ENCODE measurements at regions of chr17 and their contacts with region 1.

Region 1: DNA sequence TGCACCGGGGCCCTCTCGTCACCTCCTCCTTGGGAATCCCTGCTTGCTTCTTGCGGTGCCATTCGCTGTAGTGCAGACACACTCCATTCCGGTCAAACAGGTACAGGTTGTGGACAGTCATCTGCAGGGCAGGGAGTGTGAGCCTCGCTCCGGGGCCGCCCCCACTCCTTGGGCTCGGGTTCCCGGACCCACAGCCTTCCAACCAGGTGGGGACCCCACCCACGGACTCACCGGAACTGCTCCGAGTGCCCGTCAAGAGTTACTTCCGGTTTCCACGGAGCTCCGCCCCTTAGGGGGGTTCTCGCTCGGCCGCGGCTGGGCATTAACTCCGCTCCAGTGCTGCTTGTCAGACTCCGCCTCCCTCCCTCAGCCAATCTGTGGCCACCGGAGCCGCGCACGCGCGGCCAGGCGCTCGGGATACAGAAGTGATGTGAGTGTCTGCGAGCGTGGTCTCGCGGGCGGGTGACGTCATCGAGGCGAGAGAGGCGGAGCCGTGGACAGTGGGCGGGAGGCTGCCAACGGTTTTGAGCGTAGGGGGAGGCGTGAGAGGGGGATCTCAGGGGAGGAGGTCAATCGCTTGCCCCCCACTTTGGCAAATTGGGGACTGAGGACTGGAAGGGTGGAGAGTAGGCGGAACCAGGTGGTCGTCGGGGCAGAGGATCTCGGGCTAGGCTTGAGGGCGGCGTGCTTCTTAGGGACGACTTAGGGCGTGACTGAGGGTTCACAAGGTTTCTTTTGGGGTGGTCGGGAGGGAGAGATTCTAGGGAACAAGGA is at the starts of genes CNTROB and TRAPPC1:
- DNase-seq: peak; percentile 99
- ATAC-seq: peak; percentile 96
- H3K4me3 Mint-ChIP-seq: peak within 1 kb of the TSS; percentile 97
- H3K27ac Mint-ChIP-seq: peak within 1 kb of the TSS; percentile 92
- H3K4me1 Mint-ChIP-seq: peaks cover 48% of the 10 kb centered on the region
- H3K27me3 Mint-ChIP-seq: no peaks in the 10 kb centered on the region
- CTCF ChIP-seq: no peak
- total RNA-seq, gene CNTROB: 23.0 and 24.6 TPM in 2 replicates
- total RNA-seq, gene TRAPPC1: 129 and 167 TPM in 2 replicates

Region 2: DNA sequence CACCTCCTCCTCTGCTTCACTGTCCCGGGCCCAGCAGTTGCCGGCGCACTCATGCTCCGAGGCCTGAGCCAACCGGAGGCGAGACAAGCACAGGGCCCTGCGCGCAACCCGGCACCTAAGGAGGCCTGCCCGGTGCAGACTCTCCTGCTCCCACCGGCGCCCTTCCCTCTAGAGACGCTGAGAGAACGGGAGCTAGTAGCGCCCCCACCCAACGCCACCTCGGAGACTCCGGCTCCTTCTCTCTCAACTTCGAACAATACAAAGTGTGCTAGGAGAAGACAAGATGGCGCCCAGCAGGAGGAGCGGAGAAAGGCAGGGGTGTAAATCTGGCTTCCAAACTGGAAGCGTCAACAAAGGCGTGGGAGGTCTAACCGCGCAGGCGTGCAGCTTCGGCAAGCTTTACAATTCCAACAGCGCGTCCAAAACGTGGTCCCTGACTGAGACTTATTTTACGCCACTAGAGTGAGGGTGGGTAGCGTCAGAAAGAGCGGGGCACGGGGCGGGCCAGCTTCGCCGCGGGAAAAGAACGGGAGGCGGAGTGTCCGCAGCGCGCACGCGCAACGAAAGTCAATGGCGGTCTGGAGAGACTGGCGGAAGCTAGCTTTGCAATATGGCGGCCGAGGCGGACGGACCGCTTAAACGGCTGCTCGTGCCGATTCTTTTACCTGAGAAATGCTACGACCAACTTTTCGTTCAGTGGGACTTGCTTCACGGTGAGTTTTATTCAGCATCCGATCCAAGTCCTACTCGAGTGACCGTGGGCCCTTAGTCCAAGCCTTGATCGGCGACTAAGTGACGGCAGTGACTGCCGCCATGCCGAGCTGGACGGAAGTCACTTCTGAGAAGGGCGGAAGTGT is 348.4 kb before region 1 on chr17 and contains the start of gene MPDU1:
- CTCF ChIA-PET with region 1: no interaction called
- POLR2A ChIA-PET with region 1: interaction called, 10 read pairs
- intact Hi-C with region 1: no loop called
- DNase-seq: peak; percentile 90
- ATAC-seq: peak; percentile 76
- H3K4me3 Mint-ChIP-seq: peak within 1 kb of the TSS; percentile 100
- H3K27ac Mint-ChIP-seq: peak within 1 kb of the TSS; percentile 100
- H3K4me1 Mint-ChIP-seq: peaks cover 64% of the 10 kb centered on the region
- H3K27me3 Mint-ChIP-seq: no peaks in the 10 kb centered on the region
- CTCF ChIP-seq: no peak
- total RNA-seq, gene MPDU1: 50.7 and 58.9 TPM in 2 replicates

Region 3: GRCh38 chr17:7834962-7835813 is 96.7 kb before region 1 on chr17:
- CTCF ChIA-PET with region 1: no interaction called
- POLR2A ChIA-PET with region 1: interaction called, 13 read pairs
- intact Hi-C with region 1: no loop called
- DNase-seq: peak; percentile 79
- ATAC-seq: peak; percentile 47
- H3K4me3 Mint-ChIP-seq: peak overlapping the region; percentile 97
- H3K27ac Mint-ChIP-seq: peak overlapping the region; percentile 94
- H3K4me1 Mint-ChIP-seq: peaks cover 53% of the 10 kb centered on the region
- H3K27me3 Mint-ChIP-seq: peaks cover 14% of the 10 kb centered on the region
- CTCF ChIP-seq: no peak

Region 4: DNA sequence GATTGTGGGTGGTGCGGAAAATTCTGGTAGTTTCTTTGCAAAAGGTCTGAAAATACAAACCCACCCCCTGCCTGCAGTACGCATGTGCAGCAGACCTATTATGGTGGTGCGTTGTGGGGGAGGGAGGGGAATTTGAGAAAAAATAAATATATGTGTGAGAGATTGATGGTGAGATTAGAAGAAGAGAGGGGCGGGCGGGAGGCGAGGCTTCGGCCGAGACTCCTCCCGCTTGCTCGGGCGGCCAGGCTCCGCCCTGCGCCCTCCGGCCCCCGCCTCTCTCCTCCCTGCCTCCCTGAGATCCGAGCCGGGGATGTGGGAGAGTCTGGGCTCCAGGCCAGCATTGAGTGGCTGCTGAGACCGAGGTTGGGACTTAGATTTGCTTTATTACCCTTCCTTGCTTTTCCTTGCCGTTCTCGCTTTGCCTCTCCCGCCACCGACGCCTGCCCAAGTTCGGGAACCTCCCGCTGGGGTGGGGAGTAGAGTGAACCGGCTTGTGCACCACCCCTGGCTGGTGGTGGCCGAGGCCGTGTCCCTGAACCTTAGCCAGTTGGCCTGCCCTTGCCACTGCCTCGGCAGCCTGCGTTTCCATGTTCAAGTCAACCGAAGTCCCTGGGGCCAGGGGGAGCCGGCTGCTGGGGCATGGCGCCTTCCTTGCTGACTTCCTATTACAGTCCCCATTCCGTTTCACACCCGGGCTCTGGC is 44.3 kb before region 1 on chr17:
- CTCF ChIA-PET with region 1: no interaction called
- POLR2A ChIA-PET with region 1: interaction called, 19 read pairs
- intact Hi-C with region 1: loop called (anchors 1 kb)
- DNase-seq: peak; percentile 60
- ATAC-seq: peak; percentile 76
- H3K4me3 Mint-ChIP-seq: no peak overlapping the region
- H3K27ac Mint-ChIP-seq: no peak overlapping the region
- H3K4me1 Mint-ChIP-seq: peaks cover 8% of the 10 kb centered on the region
- H3K27me3 Mint-ChIP-seq: no peaks in the 10 kb centered on the region
- CTCF ChIP-seq: no peak

Region 5: DNA sequence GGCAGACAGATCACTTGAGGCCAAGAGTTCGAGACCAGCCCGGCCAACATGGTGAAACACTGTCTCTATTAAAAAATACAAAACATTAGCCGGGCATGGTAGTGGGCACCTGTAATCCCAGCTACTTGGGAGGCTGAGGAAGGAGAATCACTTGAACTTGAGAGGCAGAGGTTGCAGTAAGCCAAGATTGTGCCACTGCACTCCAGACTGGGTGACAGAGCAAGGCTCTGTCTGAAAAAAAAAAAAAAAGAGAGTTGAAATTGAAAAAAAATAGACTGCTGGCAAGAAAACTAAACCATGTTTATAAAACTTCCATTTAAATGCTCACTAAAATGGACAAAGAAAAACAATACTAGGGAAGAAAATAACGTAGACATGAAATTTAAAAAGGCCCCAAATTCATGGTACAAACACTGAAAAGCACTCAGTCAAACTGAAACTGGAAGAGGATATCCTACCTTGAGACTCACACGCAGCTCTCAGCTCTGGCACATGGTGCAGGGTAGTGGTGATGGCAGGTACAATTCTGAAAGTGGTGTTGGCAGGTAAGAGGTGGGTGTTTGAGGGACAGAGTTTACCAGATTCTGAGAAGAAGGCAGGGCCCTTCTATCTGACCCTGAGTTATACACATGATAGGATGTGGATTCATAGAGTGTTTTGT is 19.4 kb after region 1 on chr17:
- CTCF ChIA-PET with region 1: no interaction called
- POLR2A ChIA-PET with region 1: interaction called, 3 read pairs
- intact Hi-C with region 1: loop called (anchors 2 kb)
- DNase-seq: no peak
- ATAC-seq: peak; percentile 87
- H3K4me3 Mint-ChIP-seq: no peak overlapping the region
- H3K27ac Mint-ChIP-seq: peak overlapping the region; percentile 86
- H3K4me1 Mint-ChIP-seq: peaks cover 10% of the 10 kb centered on the region
- H3K27me3 Mint-ChIP-seq: no peaks in the 10 kb centered on the region
- CTCF ChIP-seq: no peak

Region 6: DNA sequence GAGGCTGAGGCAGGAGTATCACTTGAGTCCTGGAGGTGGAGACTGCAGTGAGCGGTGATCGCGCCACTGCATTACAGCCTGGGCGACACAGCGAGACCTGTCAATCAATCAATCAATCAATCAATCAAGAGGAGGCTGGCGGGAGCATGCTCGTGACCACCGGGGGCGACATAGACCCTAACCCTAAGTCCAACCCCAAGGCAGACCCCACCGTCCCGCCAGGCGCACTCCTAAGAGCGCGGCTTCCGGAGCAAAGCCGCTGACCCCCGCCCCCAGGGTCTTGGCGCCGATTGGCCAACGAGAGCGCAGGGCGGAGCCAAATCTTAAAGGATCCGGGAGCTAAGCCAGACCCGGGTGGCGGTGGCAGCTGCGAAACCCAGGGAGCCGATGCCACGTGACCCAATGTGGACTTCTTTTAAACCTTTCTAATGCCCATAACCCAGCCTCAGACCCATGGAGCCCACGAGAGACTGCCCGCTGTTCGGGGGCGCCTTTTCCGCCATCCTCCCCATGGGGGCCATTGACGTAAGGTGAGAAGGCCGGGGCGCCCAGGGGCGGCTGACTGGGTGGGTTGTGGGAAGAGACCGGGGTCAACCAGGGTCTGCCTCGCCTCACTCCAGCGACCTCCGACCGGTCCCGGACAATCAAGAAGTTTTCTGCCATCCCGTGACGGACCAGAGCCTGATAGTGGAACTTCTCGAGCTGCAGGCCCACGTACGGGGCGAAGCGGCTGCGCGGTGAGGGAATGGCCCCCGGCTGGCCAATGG is 356.6 kb after region 1 on chr17 and contains the start of gene RANGRF:
- CTCF ChIA-PET with region 1: no interaction called
- POLR2A ChIA-PET with region 1: no interaction called
- intact Hi-C with region 1: loop called (anchors 5 kb)
- DNase-seq: peak; percentile 77
- ATAC-seq: peak; percentile 93
- H3K4me3 Mint-ChIP-seq: peak within 1 kb of the TSS; percentile 98
- H3K27ac Mint-ChIP-seq: peak within 1 kb of the TSS; percentile 97
- H3K4me1 Mint-ChIP-seq: peaks cover 51% of the 10 kb centered on the region
- H3K27me3 Mint-ChIP-seq: no peaks in the 10 kb centered on the region
- CTCF ChIP-seq: no peak
- total RNA-seq, gene RANGRF: 50.1 and 50.9 TPM in 2 replicates